Heart right ventricle (tissue), 16 donors: ENCODE measurements at regions of chr22 and their contacts with region 1.

Region 1: GRCh38 chr22:25334162-25334490 is 114.7 kb downstream of the CRYBB2 start:
- DNase-seq: peak; percentile 48 to 78
- ATAC-seq: peak; percentile 17 to 83 (median 70)
- H3K4me3 ChIP-seq: no peak overlapping the region
- H3K27ac ChIP-seq: no peak overlapping the region
- H3K4me1 ChIP-seq: no peaks in the 10 kb centered on the region
- H3K27me3 ChIP-seq: no peaks in the 10 kb centered on the region
- CTCF ChIP-seq: peak; percentile 32 to 59 (median 54)

Region 2: GRCh38 chr22:25202290-25202921 is 131.7 kb before region 1 on chr22:
- intact Hi-C with region 1: loop called in 1 of 10 experiments (anchors 10 kb)
- DNase-seq: peak; percentile 31 to 40
- ATAC-seq: peak in 7 of 8 donors; percentile 46 to 75 (median 63)
- H3K4me3 ChIP-seq: no peak overlapping the region
- H3K27ac ChIP-seq: no peak overlapping the region
- H3K4me1 ChIP-seq: peaks cover 0 to 5% (median 0%) of the 10 kb centered on the region in 9 donors
- H3K27me3 ChIP-seq: no peaks in the 10 kb centered on the region
- CTCF ChIP-seq: peak; percentile 76 to 92 (median 86)

Region 3: DNA sequence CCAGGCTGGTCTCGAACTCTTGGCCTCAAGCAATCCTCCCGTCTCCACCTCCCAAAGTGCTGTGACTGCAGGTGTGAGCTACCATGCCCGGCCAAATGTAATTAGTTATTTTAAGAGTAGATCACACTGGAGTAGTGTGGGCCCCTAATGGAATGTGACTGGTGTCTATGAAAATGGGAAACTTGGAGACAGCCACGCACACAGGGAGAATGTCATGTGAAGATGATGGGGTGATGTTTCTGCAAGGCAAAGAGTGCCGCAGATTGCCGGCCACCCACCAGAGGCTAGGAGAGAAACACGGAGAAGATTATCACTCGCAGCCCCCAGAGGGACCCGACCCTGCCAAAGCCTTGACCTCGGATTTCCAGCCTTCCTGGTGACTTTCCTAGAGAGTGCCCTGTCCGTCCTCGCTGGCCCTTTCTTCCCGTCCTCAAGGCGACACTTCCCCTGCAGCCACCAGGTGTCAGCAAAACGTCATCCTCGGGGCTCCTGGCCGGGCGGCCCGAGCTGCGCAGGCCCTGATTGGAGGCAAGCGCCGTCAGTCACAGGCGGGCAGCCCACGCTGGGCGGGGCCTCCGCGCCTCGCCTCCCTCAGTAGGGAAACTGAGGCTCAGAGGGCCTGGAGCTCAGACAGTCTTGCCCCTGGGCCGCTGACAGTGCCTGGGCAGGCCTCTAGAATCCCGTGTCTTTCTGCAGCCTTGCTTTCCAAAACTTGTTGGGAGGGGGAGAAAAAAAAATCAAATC is 98.4 kb before region 1 on chr22:
- intact Hi-C with region 1: loop called in 2 of 10 experiments (anchors 5 to 10 kb)
- DNase-seq: peak; percentile 80
- ATAC-seq: peak; percentile 78 to 95 (median 92)
- H3K4me3 ChIP-seq: no peak overlapping the region
- H3K27ac ChIP-seq: no peak overlapping the region
- H3K4me1 ChIP-seq: peaks cover 0 to 6% (median 0%) of the 10 kb centered on the region in 9 donors
- H3K27me3 ChIP-seq: peaks cover 5 to 53% (median 27%) of the 10 kb centered on the region in 7 donors
- CTCF ChIP-seq: peak; percentile 25 to 75 (median 66)